WTC11 (cell line): ENCODE measurements at regions of chr1 and their contacts with region 1.

Region 1: GRCh38 chr1:8858888-8859706 is 19.4 kb downstream of the ENO1 start:
- DNase-seq: peak; percentile 47
- ATAC-seq: peak; percentile 14
- H3K4me3 Mint-ChIP-seq: no peak overlapping the region
- H3K27ac Mint-ChIP-seq: peak overlapping the region; percentile 94
- H3K4me1 Mint-ChIP-seq: peaks cover 27% of the 10 kb centered on the region
- H3K27me3 Mint-ChIP-seq: no peaks in the 10 kb centered on the region; the same call in 1 of the 2 replicates
- CTCF ChIP-seq: peak; percentile 30; the same call in 1 of the 2 replicates

Region 2: GRCh38 chr1:8873506-8874229 is 14.6 kb after region 1 on chr1:
- CTCF ChIA-PET with region 1: interaction called, 13 read pairs
- POLR2A ChIA-PET with region 1: interaction called, 3 read pairs
- DNase-seq: peak; percentile 66
- ATAC-seq: peak; percentile 71
- H3K4me3 Mint-ChIP-seq: peak overlapping the region; percentile 92
- H3K27ac Mint-ChIP-seq: peak overlapping the region; percentile 87
- H3K4me1 Mint-ChIP-seq: peaks cover 74% of the 10 kb centered on the region
- H3K27me3 Mint-ChIP-seq: no peaks in the 10 kb centered on the region; the same call in 1 of the 2 replicates
- CTCF ChIP-seq: no peak

Region 3: DNA sequence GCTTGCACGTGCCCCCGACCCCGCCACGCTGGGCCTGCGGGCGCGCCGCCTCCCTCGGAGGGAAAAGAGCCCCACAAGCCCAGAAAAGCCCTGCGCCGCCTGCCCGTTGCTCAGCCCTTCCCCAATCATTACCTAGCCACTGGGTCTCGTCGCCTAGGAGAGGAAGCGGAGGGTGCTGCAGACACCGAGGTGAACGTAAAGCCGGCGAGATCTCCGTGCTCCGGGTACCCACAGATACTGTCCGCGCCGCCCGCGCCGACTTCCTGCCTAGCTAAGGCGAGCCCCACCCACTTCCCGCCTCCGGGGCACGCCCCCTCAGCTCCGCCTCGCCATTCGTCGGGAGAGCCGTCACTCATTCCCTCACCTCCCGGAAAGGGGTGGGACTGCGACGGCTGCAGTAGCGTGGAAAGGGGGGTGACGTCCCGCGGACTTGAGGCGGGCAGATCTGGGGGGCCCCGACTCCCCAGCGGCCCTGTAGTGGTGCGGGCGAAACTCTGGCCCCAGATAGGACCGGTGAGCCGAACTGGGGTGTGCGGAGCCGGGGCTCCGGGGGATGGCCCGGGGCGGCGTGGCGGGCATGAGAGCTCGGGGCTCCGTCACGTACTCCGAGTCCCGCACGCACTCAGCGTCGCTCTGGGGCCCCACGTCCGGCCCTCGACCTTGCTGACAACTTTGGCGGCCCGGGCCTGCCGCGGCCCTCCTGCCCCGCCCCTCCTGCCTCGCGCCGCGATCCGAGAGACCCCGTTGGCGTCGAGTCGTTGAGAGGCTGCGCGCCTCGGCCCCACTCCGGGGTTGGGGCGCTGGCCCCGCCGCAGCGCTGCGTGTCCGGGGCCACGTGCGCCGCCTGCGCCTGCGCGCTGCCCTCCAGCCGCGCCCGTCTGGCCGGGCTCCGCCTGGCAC is 19.6 kb after region 1 on chr1 and contains the start of gene ENO1:
- CTCF ChIA-PET with region 1: interaction called, 13 read pairs
- POLR2A ChIA-PET with region 1: interaction called, 3 read pairs
- DNase-seq: peak; percentile 96
- ATAC-seq: peak; percentile 79
- H3K4me3 Mint-ChIP-seq: peak within 1 kb of the TSS; percentile 92
- H3K27ac Mint-ChIP-seq: peak within 1 kb of the TSS; percentile 92
- H3K4me1 Mint-ChIP-seq: peaks cover 50% of the 10 kb centered on the region
- H3K27me3 Mint-ChIP-seq: peaks cover 14% of the 10 kb centered on the region
- CTCF ChIP-seq: no peak
- total RNA-seq, gene ENO1: 1,978 to 2,328 TPM (median 2,316 TPM) in 3 replicates